ENCODE measurements at regions of chr11 and their contacts with region 1.

Region 1: GRCh38 chr11:12235947-12236743 is 125.8 kb downstream of the MICAL2 start:
- DNase-seq: peak; percentile 74
- H3K4me3 Mint-ChIP-seq: no peak overlapping the region
- H3K27ac Mint-ChIP-seq: peak overlapping the region; percentile 86
- H3K4me1 Mint-ChIP-seq: peaks cover 38% of the 10 kb centered on the region
- H3K27me3 Mint-ChIP-seq: no peaks in the 10 kb centered on the region

Region 2: DNA sequence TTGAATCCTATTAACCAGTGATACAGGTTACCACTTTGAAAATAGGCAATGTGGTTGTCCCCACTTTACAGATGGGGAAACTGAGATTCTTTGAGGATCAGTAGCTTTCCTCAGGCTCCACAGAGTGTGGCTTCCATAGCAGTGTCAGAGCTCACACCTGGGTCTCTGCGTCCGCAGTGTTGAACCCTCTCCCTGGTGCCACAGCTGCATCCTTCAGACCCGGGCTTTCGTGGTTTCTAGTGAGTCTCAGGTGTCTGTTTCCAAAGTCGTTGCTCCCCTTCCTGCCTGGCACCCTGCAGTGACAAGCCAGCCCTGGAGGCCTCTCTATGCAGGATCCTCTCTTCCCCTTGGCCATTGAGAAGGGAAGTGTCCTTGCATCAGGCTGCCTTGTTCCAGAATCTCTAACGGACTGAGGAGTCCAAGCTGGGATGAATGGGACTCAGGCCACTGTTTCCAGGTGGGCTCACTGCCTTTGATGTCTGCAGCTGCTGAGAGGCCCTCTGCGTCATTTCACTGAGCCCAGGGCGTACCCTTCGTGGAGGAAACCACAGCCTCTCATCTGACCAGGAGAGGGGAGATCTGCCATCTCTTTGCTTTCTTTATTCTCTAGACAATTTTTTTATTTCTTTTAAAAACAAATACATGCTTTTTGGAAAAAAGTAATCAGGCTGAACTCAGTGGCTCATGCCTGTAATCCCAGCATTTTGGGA is 174.1 kb before region 1 on chr11:
- CTCF ChIA-PET with region 1: interaction called, 10 read pairs
- POLR2A ChIA-PET with region 1: no interaction called
- intact Hi-C with region 1: no loop called
- DNase-seq: peak; percentile 6
- H3K4me3 Mint-ChIP-seq: no peak overlapping the region
- H3K27ac Mint-ChIP-seq: no peak overlapping the region
- H3K4me1 Mint-ChIP-seq: peaks cover 2% of the 10 kb centered on the region
- H3K27me3 Mint-ChIP-seq: no peaks in the 10 kb centered on the region

Region 3: GRCh38 chr11:12149672-12150225 is 86.4 kb before region 1 on chr11:
- CTCF ChIA-PET with region 1: interaction called, 19 read pairs
- POLR2A ChIA-PET with region 1: interaction called, 10 read pairs
- intact Hi-C with region 1: loop called (anchors 1 kb)
- DNase-seq: peak; percentile 83
- H3K4me3 Mint-ChIP-seq: peak overlapping the region; percentile 30
- H3K27ac Mint-ChIP-seq: peak overlapping the region; percentile 93
- H3K4me1 Mint-ChIP-seq: peaks cover 63% of the 10 kb centered on the region
- H3K27me3 Mint-ChIP-seq: no peaks in the 10 kb centered on the region

Region 4: DNA sequence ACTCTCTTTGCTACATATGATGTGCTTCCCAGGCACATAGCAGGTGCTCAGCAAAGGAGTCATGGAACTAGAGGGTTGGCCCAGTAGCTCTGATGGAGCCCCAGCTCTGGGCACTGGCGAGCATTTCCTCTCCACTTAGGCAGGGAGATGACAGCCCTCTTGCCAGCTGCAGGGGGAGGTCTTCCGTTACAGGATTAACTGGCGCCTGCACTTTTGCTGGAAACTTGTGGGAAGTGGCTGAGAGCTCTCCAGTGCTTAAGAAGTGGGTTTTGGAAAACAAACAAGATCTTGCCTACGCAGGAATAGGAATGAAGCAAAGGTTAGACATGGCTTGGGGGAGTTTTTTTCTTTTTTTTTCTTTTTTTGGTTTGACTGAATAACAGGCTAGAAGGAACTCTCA is 50.2 kb before region 1 on chr11:
- CTCF ChIA-PET with region 1: interaction called, 11 read pairs
- POLR2A ChIA-PET with region 1: interaction called, 6 read pairs
- intact Hi-C with region 1: loop called (anchors 1 kb)
- DNase-seq: no peak
- H3K4me3 Mint-ChIP-seq: no peak overlapping the region
- H3K27ac Mint-ChIP-seq: no peak overlapping the region
- H3K4me1 Mint-ChIP-seq: peaks cover 37% of the 10 kb centered on the region
- H3K27me3 Mint-ChIP-seq: no peaks in the 10 kb centered on the region

Region 5: GRCh38 chr11:12207384-12208150 is 28.6 kb before region 1 on chr11:
- CTCF ChIA-PET with region 1: interaction called, 20 read pairs
- POLR2A ChIA-PET with region 1: interaction called, 10 read pairs
- intact Hi-C with region 1: loop called (anchors 1 kb)
- DNase-seq: peak; percentile 84
- H3K4me3 Mint-ChIP-seq: peak overlapping the region; percentile 14
- H3K27ac Mint-ChIP-seq: peak overlapping the region; percentile 87
- H3K4me1 Mint-ChIP-seq: peaks cover 69% of the 10 kb centered on the region
- H3K27me3 Mint-ChIP-seq: no peaks in the 10 kb centered on the region

Region 6: DNA sequence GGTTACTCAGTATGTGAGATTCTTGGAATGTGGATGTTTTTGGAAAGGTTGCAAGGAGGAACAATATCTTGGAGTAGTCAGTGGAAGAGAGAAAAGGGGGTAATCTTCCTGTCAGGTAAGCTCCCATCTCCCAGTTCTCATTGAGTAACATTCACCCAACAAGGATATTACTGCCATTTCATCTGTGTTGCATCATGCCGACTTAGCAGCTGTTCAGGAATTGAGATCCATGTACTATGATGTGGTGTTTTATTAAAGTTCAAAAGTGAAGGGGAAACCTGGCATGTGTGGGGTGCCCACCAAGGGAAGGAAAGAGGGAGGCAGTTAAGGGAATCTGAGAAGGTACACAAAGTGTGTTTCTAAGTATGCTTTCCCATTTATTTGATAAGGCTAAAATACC is 714.5 kb after region 1 on chr11:
- CTCF ChIA-PET with region 1: no interaction called
- POLR2A ChIA-PET with region 1: no interaction called
- intact Hi-C with region 1: no loop called
- DNase-seq: no peak
- H3K4me3 Mint-ChIP-seq: no peak overlapping the region
- H3K27ac Mint-ChIP-seq: no peak overlapping the region
- H3K4me1 Mint-ChIP-seq: no peaks in the 10 kb centered on the region
- H3K27me3 Mint-ChIP-seq: peaks cover 15% of the 10 kb centered on the region